Endothelial cell of umbilical vein (primary cell): ENCODE measurements at regions of chr9 and their contacts with region 1.

Region 1: DNA sequence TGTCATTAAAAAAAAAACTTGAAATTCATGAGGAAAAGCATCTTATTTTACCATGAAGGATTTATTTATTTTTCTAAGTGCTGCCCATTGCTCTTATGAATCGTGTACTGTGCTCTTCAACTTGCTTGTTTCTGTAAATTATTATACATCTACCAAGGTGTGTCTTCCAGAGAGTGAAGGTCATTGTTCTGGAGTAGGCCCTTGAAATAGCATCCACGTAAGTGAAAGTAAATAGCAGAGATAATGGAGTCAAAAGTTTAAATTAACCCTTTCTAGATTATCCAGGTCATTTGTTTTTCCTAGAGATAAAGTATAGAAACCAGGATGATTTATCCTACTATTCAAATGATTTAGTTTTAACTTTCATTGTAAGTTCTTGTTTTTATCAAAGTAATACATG is 473.1 kb downstream of the DIRAS2 start:
- DNase-seq: no peak
- H3K4me3 ChIP-seq: no peak overlapping the region
- H3K27ac ChIP-seq: no peak overlapping the region
- H3K4me1 ChIP-seq: no peaks in the 10 kb centered on the region
- H3K27me3 ChIP-seq: no peaks in the 10 kb centered on the region
- CTCF ChIP-seq: no peak
- POLR2A ChIP-seq: no peak

Region 2: GRCh38 chr9:89999534-90000370 is 169.7 kb before region 1 on chr9:
- CTCF ChIA-PET with region 1: no interaction called
- POLR2A ChIA-PET with region 1: no interaction called
- dilution Hi-C with region 1: no loop called
- intact Hi-C with region 1: no loop called
- DNase-seq: no peak
- H3K4me3 ChIP-seq: no peak overlapping the region
- H3K27ac ChIP-seq: no peak overlapping the region
- H3K4me1 ChIP-seq: no peaks in the 10 kb centered on the region
- H3K27me3 ChIP-seq: no peaks in the 10 kb centered on the region
- CTCF ChIP-seq: no peak
- POLR2A ChIP-seq: no peak

Region 3: GRCh38 chr9:90296539-90296938 is 127.0 kb after region 1 on chr9:
- CTCF ChIA-PET with region 1: no interaction called
- POLR2A ChIA-PET with region 1: no interaction called
- dilution Hi-C with region 1: no loop called
- intact Hi-C with region 1: loop called (anchors 10 kb)
- DNase-seq: no peak
- H3K4me3 ChIP-seq: no peak overlapping the region
- H3K27ac ChIP-seq: no peak overlapping the region
- H3K4me1 ChIP-seq: no peaks in the 10 kb centered on the region
- H3K27me3 ChIP-seq: no peaks in the 10 kb centered on the region
- CTCF ChIP-seq: no peak
- POLR2A ChIP-seq: no peak

Region 4: DNA sequence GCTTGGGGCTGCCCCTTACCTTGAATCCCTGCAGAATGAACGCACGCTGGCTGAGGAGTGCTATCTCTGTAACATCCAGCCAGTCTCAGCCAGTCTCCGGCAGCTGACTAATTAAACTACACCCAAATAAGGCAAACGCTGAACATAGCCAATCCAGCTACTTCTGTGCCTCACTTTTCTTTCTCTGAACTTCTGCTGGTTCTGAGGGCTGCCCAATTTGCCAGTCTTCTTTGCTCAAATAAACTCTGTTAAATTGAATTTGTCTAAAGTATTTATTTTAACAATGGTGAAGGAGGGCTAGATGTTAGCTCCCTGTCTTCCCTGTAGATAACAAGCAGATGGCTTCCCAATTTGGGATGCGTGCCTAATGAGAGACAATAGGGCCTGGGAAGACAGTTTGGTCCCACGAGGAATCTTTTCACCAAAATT is 1408.2 kb after region 1 on chr9:
- CTCF ChIA-PET with region 1: no interaction called
- POLR2A ChIA-PET with region 1: no interaction called
- dilution Hi-C with region 1: no loop called
- intact Hi-C with region 1: loop called (anchors 5 kb)
- DNase-seq: no peak
- H3K4me3 ChIP-seq: no peak overlapping the region
- H3K27ac ChIP-seq: no peak overlapping the region
- H3K4me1 ChIP-seq: no peaks in the 10 kb centered on the region
- H3K27me3 ChIP-seq: no peaks in the 10 kb centered on the region
- CTCF ChIP-seq: no peak
- POLR2A ChIP-seq: no peak